Activated B cell treated with CpG ODN at 0.5 μM for 24 hours (primary cell): ENCODE measurements at regions of chr2 and their contacts with region 1.

Region 1: GRCh38 chr2:241324775-241325174 is 9.1 kb downstream of the SEPTIN2 start:
- DNase-seq: no peak
- ATAC-seq: peak; percentile 64
- H3K4me3 Mint-ChIP-seq: peak overlapping the region; percentile 0
- H3K27ac Mint-ChIP-seq: peak overlapping the region; percentile 3
- H3K4me1 Mint-ChIP-seq: peaks cover 54% of the 10 kb centered on the region
- H3K27me3 Mint-ChIP-seq: no peaks in the 10 kb centered on the region
- CTCF ChIP-seq: no peak

Region 2: DNA sequence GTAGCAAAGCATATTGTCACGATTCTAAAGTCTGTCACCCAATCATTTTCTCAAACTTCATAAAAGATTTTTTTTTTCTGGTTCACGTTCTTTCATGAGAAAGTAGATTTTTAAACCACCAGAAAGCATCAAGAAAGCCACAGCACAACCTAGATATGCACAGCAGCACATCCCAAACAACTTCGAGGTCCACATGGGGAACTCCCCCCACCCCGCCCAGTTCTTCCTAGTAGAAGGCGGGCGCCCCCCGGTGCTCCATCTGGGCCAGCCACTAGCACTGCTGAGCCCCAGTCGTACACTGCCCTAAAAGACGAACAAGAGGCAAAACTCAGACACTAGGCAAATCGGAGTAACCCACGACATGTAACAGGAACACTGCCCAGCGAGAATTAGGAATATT is 24.8 kb before region 1 on chr2:
- CTCF ChIA-PET with region 1: no interaction called
- POLR2A ChIA-PET with region 1: interaction called, 13 read pairs
- intact Hi-C with region 1: no loop called
- DNase-seq: no peak
- ATAC-seq: no peak
- H3K4me3 Mint-ChIP-seq: no peak overlapping the region
- H3K27ac Mint-ChIP-seq: no peak overlapping the region
- H3K4me1 Mint-ChIP-seq: peaks cover 43% of the 10 kb centered on the region
- H3K27me3 Mint-ChIP-seq: no peaks in the 10 kb centered on the region
- CTCF ChIP-seq: no peak

Region 3: DNA sequence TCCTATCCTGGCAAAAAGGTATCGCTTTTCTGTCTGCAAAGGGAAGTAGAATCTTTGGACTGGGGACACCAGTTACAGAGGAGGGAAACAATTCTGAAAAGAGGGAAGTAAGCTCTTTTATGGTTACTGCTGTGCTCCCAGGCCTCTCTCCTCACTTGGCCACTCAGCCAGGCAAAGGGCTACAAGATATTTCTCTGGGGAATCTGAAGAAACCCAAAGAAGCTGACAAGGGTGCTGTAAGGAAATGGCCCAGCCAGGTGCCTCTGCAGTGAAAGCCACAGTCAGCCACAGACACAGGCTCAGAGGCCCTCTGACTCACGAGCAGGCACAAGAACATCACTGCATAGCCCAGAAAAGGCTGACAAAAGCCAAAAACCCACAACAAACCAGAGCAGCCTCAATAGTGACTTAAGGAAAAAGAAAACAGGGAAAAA is 15.1 kb before region 1 on chr2:
- CTCF ChIA-PET with region 1: no interaction called
- POLR2A ChIA-PET with region 1: interaction called, 10 read pairs
- intact Hi-C with region 1: loop called (anchors 2 kb)
- DNase-seq: peak; percentile 51
- ATAC-seq: peak; percentile 85
- H3K4me3 Mint-ChIP-seq: peak overlapping the region; percentile 68
- H3K27ac Mint-ChIP-seq: peak overlapping the region; percentile 85
- H3K4me1 Mint-ChIP-seq: peaks cover 75% of the 10 kb centered on the region
- H3K27me3 Mint-ChIP-seq: no peaks in the 10 kb centered on the region
- CTCF ChIP-seq: no peak

Region 4: GRCh38 chr2:241372361-241372992 is 47.7 kb after region 1 on chr2:
- CTCF ChIA-PET with region 1: no interaction called
- POLR2A ChIA-PET with region 1: no interaction called
- intact Hi-C with region 1: no loop called
- DNase-seq: no peak
- ATAC-seq: no peak
- H3K4me3 Mint-ChIP-seq: no peak overlapping the region
- H3K27ac Mint-ChIP-seq: peak overlapping the region; percentile 46
- H3K4me1 Mint-ChIP-seq: peaks cover 68% of the 10 kb centered on the region
- H3K27me3 Mint-ChIP-seq: no peaks in the 10 kb centered on the region
- CTCF ChIP-seq: no peak